A549 (cell line): ENCODE measurements at regions of chr15 and their contacts with region 1.

Region 1: DNA sequence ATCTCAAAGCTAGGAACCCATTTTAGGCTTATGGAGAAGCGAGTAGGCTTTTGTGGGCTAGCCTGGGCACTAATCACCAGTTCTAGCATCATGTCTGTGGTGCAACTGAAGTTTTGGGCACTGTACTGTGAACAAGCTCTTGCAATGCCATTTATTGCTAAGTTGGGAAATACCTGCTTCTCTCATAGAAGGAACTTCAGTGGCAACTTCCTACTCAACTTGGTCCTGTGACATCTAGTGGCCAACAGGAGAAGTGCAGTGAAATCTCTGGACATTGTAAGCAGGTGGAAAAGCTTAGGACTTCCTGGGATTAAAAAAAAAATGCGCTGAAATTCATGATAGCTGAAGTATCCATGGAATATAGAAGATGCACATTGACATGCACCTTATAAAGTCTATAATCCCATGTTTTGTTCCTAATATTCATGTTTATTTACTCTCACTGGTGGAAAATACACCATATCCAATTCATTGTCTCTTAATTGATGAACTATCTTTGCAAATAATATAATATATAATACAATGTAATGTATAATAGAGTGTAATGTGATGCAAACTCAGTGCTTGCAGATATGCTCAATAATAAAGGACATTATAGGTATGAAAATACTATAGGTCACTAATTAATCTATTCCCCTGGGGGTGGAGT is 6.5 kb upstream of the ALDH1A3 start:
- DNase-seq: peak; percentile 88 to 91
- ATAC-seq: peak; percentile 72 to 87
- H3K4me3 ChIP-seq: no peak overlapping the region
- H3K27ac ChIP-seq: no peak overlapping the region
- H3K4me1 ChIP-seq: no peaks in the 10 kb centered on the region
- CTCF ChIP-seq: peak; percentile 91
- EP300 ChIP-seq: no peak
- POLR2A ChIP-seq: no peak
- RAD21 ChIP-seq: peak; percentile 80 to 89

Region 2: DNA sequence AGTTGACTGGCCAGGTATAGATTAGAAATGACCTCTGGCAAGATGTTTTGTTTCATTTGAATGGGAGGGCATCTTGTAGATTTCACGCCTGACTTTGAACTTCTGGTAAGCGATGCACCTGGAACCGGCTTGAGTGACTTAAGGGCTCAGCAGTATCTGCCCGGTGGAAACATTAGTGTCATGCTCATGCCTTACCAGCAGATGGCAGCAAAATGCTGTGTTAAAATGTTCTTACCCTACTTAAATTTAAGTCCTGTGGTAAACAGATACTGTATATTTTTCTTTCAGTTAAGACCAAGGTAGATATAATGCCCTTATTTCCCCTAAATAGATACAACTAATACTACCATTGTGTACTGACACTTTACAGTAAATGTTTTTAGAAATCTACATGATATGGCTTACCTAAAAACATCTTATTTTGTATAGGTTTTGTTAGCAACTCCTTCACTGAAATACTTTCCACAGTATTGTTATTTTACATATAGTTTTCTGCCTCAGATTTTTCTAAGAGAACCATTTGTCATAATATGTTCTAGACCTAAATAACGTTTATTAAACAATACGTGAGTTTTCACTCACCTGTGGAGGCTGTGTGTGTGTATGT is 245.3 kb before region 1 on chr15:
- CTCF ChIA-PET with region 1: interaction called, 19 read pairs
- POLR2A ChIA-PET with region 1: no interaction called
- DNase-seq: peak; percentile 58 to 84
- ATAC-seq: peak; percentile 88 to 95
- H3K4me3 ChIP-seq: no peak overlapping the region
- H3K27ac ChIP-seq: no peak overlapping the region
- H3K4me1 ChIP-seq: no peaks in the 10 kb centered on the region
- CTCF ChIP-seq: peak; percentile 96
- EP300 ChIP-seq: no peak
- POLR2A ChIP-seq: no peak
- RAD21 ChIP-seq: peak; percentile 93

Region 3: GRCh38 chr15:100686725-100687473 is 186.3 kb before region 1 on chr15:
- CTCF ChIA-PET with region 1: interaction called, 21 read pairs
- POLR2A ChIA-PET with region 1: no interaction called
- DNase-seq: no peak
- ATAC-seq: no peak
- H3K4me3 ChIP-seq: no peak overlapping the region
- H3K27ac ChIP-seq: no peak overlapping the region
- H3K4me1 ChIP-seq: 0 out of 3 replicates have a peak, but pooled peaks cover 4% of the 10 kb centered on the region
- CTCF ChIP-seq: no peak
- EP300 ChIP-seq: no peak
- POLR2A ChIP-seq: no peak
- RAD21 ChIP-seq: no peak

Region 4: DNA sequence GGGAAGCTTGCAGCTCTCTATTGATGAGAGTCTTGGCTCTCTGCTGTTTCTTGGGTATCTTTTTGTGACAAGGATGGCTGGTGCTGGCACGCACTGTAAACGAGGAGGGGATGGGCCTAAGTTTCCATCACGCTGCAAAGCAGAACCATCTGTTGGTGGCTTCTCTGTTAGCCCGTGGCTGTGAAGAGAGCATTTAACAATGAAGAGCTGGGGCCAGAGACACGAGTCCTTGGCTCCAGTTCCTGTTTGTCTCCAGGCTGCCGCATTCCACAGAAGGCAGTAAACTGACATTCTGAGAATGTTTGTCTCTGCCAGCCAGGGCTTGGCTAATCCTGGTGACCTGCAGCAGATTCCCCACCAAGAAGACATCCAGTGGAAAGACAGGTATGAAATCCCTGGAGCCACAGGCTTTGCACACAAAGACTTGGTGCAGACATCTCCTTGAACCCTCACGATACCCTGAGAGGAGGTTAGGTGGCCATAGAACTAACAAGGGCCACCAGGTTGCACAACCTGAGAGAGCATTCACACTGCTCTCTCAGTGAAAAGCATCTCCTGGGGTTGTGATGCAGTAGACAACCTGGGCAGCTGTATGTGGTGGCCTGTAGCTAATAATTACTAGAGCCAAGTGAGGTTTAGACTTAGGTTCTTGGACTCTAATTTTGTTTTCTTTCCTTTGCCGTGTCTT is 139.9 kb before region 1 on chr15:
- CTCF ChIA-PET with region 1: interaction called, 10 read pairs
- POLR2A ChIA-PET with region 1: no interaction called
- DNase-seq: peak in 1 of 2 experiments; percentile 36
- ATAC-seq: peak; percentile 26 to 66; a peak in 3 of 6 replicates
- H3K4me3 ChIP-seq: no peak overlapping the region
- H3K27ac ChIP-seq: peak overlapping the region in 1 of 2 experiments; percentile 52; a peak in 3 of 6 replicates
- H3K4me1 ChIP-seq: peaks cover 19% of the 10 kb centered on the region
- CTCF ChIP-seq: no peak
- EP300 ChIP-seq: no peak
- POLR2A ChIP-seq: no peak
- RAD21 ChIP-seq: no peak

Region 5: DNA sequence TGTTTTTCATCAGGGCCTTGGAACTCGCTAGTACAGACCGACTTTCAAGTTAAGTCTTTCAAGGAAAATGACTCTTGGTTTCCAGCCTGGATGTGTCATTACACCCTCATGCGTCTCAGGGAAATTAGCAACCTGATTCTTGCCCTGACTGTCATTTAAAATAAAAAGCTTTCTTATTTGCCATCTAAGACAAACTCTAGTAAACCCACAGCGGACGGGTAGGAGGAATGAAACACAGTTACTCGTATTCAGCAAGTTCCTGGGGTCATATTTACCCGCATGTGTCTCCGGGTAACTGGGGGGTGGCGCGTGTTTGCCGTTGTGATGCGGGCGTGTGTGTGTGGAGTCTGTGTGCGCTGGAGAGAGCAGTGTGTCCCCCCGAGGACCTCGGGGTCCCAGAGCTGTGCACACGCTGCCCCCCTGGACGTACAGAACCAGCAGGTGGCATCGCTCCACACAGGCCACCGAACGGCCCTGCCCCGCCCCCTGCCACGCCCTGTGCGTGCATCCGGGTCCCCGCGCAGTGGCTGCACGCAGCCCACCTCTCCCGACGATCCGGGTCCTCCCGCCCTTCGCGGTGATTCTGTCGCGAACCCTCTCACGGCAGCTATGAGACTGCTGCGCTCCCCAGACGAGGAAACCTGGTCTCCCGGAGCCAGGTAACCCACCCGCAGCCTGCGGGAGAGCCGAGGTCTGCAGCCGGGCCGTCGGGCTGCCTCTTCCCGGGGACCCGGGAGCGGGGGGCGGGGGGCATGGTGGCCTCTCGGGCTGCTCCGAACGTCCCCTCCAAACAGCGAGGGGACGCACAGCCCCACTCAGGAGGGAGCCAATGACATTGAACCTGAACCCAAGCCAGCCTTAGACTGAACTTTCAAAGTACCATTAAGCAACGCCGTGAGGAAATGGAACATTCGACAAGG is 23.6 kb before region 1 on chr15:
- CTCF ChIA-PET with region 1: interaction called, 19 read pairs
- POLR2A ChIA-PET with region 1: no interaction called
- DNase-seq: peak; percentile 82 to 96
- ATAC-seq: peak; percentile 98 to 99
- H3K4me3 ChIP-seq: peak overlapping the region; percentile 70
- H3K27ac ChIP-seq: peak overlapping the region; percentile 82 to 90
- H3K4me1 ChIP-seq: 0 out of 3 replicates have a peak, but pooled peaks cover 3% of the 10 kb centered on the region
- CTCF ChIP-seq: peak; percentile 63
- EP300 ChIP-seq: no peak
- POLR2A ChIP-seq: peak; percentile 77
- RAD21 ChIP-seq: peak; percentile 51 to 65

Region 6: DNA sequence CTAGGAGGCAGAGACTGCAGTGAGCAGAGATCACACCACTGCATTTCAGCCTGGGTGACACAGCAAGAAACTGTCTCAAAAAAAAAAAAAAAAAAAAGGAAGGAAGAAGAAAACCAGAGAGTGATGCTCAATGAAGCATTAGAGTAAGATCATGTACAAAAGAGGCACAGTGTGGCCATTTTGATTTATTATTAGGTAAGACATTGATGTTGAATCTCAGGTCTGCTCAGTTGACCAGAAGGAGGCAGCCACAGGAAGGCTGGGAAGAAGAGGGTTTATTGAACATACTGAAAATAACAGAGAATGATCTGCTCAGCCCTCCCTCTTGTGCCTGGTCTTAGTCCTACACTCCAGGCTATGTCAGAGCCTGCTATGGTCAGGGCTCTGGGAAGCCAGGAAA is 61.6 kb after region 1 on chr15:
- CTCF ChIA-PET with region 1: no interaction called
- POLR2A ChIA-PET with region 1: no interaction called
- DNase-seq: peak in 1 of 2 experiments; percentile 58
- ATAC-seq: peak; percentile 85 to 88
- H3K4me3 ChIP-seq: no peak overlapping the region
- H3K27ac ChIP-seq: peak overlapping the region in 1 of 2 experiments; percentile 29; a peak in 2 of 6 replicates
- H3K4me1 ChIP-seq: peaks cover 9% of the 10 kb centered on the region; the same call in 2 of the 3 replicates
- CTCF ChIP-seq: peak; percentile 7; the same call in 1 of the 3 replicates
- EP300 ChIP-seq: no peak
- POLR2A ChIP-seq: no peak
- RAD21 ChIP-seq: peak in 1 of 2 experiments; percentile 41; a peak in 2 of 5 replicates

Region 7: GRCh38 chr15:101000271-101000681 is 127.1 kb after region 1 on chr15:
- CTCF ChIA-PET with region 1: interaction called, 10 read pairs
- POLR2A ChIA-PET with region 1: no interaction called
- DNase-seq: no peak
- ATAC-seq: no peak
- H3K4me3 ChIP-seq: no peak overlapping the region
- H3K27ac ChIP-seq: no peak overlapping the region
- H3K4me1 ChIP-seq: 0 out of 3 replicates have a peak, but pooled peaks cover 6% of the 10 kb centered on the region
- CTCF ChIP-seq: no peak
- EP300 ChIP-seq: no peak
- POLR2A ChIP-seq: no peak
- RAD21 ChIP-seq: no peak